ENCODE measurements at regions of chr1 and their contacts with region 1.

Region 1: GRCh38 chr1:59146651-59147358 is 150.1 kb upstream of the FGGY start:
- DNase-seq: no peak
- H3K4me3 ChIP-seq: peak overlapping the region; percentile 23 to 36
- H3K27ac ChIP-seq: peak overlapping the region; percentile 20 to 55
- H3K4me1 ChIP-seq: peaks cover 2% of the 10 kb centered on the region
- H3K27me3 ChIP-seq: no peaks in the 10 kb centered on the region
- CTCF ChIP-seq: no peak
- POLR2A ChIP-seq: peak; percentile 8

Region 2: GRCh38 chr1:58816072-58816746 is 330.6 kb before region 1 on chr1:
- intact Hi-C with region 1: loop called (anchors 10 kb)
- DNase-seq: peak; percentile 88
- H3K4me3 ChIP-seq: peak overlapping the region; percentile 49 to 59
- H3K27ac ChIP-seq: peak overlapping the region; percentile 90 to 93
- H3K4me1 ChIP-seq: peaks cover 19% of the 10 kb centered on the region
- H3K27me3 ChIP-seq: no peaks in the 10 kb centered on the region
- CTCF ChIP-seq: peak in 2 of 4 experiments; percentile 23 to 31
- POLR2A ChIP-seq: peak; percentile 37

Region 3: GRCh38 chr1:59699227-59699847 is 552.5 kb after region 1 on chr1:
- intact Hi-C with region 1: loop called (anchors 10 kb)
- DNase-seq: no peak
- H3K4me3 ChIP-seq: no peak overlapping the region
- H3K27ac ChIP-seq: peak overlapping the region; percentile 58 to 64
- H3K4me1 ChIP-seq: no peaks in the 10 kb centered on the region
- H3K27me3 ChIP-seq: no peaks in the 10 kb centered on the region
- CTCF ChIP-seq: peak; percentile 90 to 94 (median 92)
- POLR2A ChIP-seq: no peak

Measured in prostate gland (tissue), 2 donors.